ENCODE measurements at regions of chr6 and their contacts with region 1.

Region 1: GRCh38 chr6:148342357-148343046 is at the start of gene SASH1:
- DNase-seq: peak; percentile 72 to 86 (median 82)
- ATAC-seq: peak; percentile 82 to 84
- H3K4me3 ChIP-seq: peak within 1 kb of the TSS; percentile 90
- H3K27ac ChIP-seq: peak within 1 kb of the TSS; percentile 83
- H3K4me1 ChIP-seq: no peaks in the 10 kb centered on the region
- H3K27me3 ChIP-seq: no peaks in the 10 kb centered on the region
- total RNA-seq, gene SASH1: 25.3 to 33.2 (median 29.5) TPM

Region 2: GRCh38 chr6:148451690-148452089 is 109.2 kb after region 1 on chr6:
- intact Hi-C with region 1: loop called in 1 of 4 experiments (anchors 10 kb)
- DNase-seq: peak in 2 of 3 donors; percentile 29 to 52
- ATAC-seq: peak in 1 of 2 donors; percentile 54
- H3K4me3 ChIP-seq: no peak overlapping the region
- H3K27ac ChIP-seq: no peak overlapping the region
- H3K4me1 ChIP-seq: peaks cover 6% of the 10 kb centered on the region
- H3K27me3 ChIP-seq: no peaks in the 10 kb centered on the region

Measured in right cardiac atrium (tissue), 5 donors.